Heart left ventricle (tissue), 16 donors: ENCODE measurements at regions of chr15 and their contacts with region 1.

Region 1: GRCh38 chr15:88982304-88982945 is 69.2 kb upstream of the MFGE8 start:
- DNase-seq: peak; percentile 77 to 92 (median 91)
- ATAC-seq: peak; percentile 85 to 98 (median 95)
- H3K4me3 ChIP-seq: peak overlapping the region in 1 of 12 donors; percentile 11
- H3K27ac ChIP-seq: peak overlapping the region; percentile 6 to 85 (median 72)
- H3K4me1 ChIP-seq: peaks cover 5 to 24% (median 18%) of the 10 kb centered on the region in 12 donors
- H3K27me3 ChIP-seq: no peaks in the 10 kb centered on the region
- CTCF ChIP-seq: peak in 1 of 12 donors; percentile 14
- POLR2A ChIP-seq: peak in 1 of 2 donors; percentile 27

Region 2: GRCh38 chr15:88913017-88913849 is 69.2 kb before region 1 on chr15 and contains the start of gene MFGE8:
- intact Hi-C with region 1: loop called in 1 of 10 experiments (anchors 5 kb)
- DNase-seq: peak; percentile 84 to 90 (median 87)
- ATAC-seq: peak; percentile 40 to 88 (median 79)
- H3K4me3 ChIP-seq: peak within 1 kb of the TSS; percentile 61 to 94 (median 83)
- H3K27ac ChIP-seq: peak within 1 kb of the TSS; percentile 84 to 98 (median 92)
- H3K4me1 ChIP-seq: peaks cover under 1 to 60% (median 37%) of the 10 kb centered on the region in 12 donors
- H3K27me3 ChIP-seq: no peaks in the 10 kb centered on the region
- CTCF ChIP-seq: peak in 6 of 12 donors; percentile 10 to 41 (median 20)
- POLR2A ChIP-seq: peak; percentile 45 to 99
- total RNA-seq, gene MFGE8: 352 to 732 (median 556) TPM

Region 3: DNA sequence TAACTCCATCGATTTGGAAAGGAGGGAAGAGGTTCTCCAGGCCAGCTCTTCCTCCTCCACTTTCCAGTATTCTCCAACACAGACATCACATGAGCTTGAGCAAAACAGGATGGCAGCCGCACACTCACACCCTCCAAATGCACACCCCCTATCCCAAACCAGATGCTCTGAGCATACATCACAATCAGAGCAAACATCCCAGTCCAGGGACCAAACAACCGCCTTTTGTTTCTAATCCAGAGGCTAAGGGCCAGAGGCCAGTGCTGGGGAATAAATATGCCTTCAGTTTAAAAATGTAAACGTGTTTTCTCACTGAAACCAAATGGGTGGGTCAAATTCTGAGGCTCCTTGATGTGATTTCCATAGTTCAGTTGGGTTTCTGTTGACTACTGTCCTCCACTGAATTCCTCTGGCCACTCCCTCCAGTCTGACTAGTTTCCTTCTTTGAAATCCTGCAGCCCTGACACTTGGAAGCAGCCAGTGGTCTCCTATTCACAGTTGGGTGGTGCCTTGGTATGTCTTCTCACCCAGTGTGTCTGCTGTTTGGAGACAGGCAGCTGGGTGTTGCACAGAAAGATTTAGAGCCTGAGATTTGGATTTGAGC is 50.1 kb before region 1 on chr15:
- intact Hi-C with region 1: loop called in 2 of 10 experiments (anchors 2 to 5 kb)
- DNase-seq: peak in 4 of 5 donors; percentile 29 to 71 (median 50)
- ATAC-seq: peak; percentile 74 to 94 (median 90)
- H3K4me3 ChIP-seq: no peak overlapping the region
- H3K27ac ChIP-seq: peak overlapping the region; percentile 65 to 85 (median 72)
- H3K4me1 ChIP-seq: peaks cover 0 to 25% (median 19%) of the 10 kb centered on the region in 12 donors
- H3K27me3 ChIP-seq: no peaks in the 10 kb centered on the region
- CTCF ChIP-seq: no peak
- POLR2A ChIP-seq: no peak

Region 4: GRCh38 chr15:89017370-89018066 is 35.1 kb after region 1 on chr15:
- intact Hi-C with region 1: loop called in 1 of 10 experiments (anchors 1 kb)
- DNase-seq: peak; percentile 79 to 87 (median 80)
- ATAC-seq: peak; percentile 57 to 73 (median 71)
- H3K4me3 ChIP-seq: peak overlapping the region in 9 of 12 donors; percentile 37 to 49 (median 42)
- H3K27ac ChIP-seq: peak overlapping the region in 11 of 12 donors; percentile 59 to 89 (median 77)
- H3K4me1 ChIP-seq: peaks cover 5 to 50% (median 29%) of the 10 kb centered on the region in 12 donors
- H3K27me3 ChIP-seq: no peaks in the 10 kb centered on the region
- CTCF ChIP-seq: peak; percentile 72 to 91 (median 80)
- POLR2A ChIP-seq: no peak

Region 5: GRCh38 chr15:89139400-89140166 is 157.2 kb after region 1 on chr15:
- intact Hi-C with region 1: no loop called
- DNase-seq: peak in 4 of 5 donors; percentile 41 to 65 (median 54)
- ATAC-seq: peak in 3 of 4 donors; percentile 10 to 14 (median 11)
- H3K4me3 ChIP-seq: no peak overlapping the region
- H3K27ac ChIP-seq: peak overlapping the region; percentile 31 to 90 (median 78)
- H3K4me1 ChIP-seq: peaks cover 22 to 100% (median 87%) of the 10 kb centered on the region in 12 donors
- H3K27me3 ChIP-seq: no peaks in the 10 kb centered on the region
- CTCF ChIP-seq: peak in 6 of 12 donors; percentile 11 to 42 (median 28)
- POLR2A ChIP-seq: no peak